ENCODE measurements at regions of chr9 and their contacts with region 1.

Region 1: GRCh38 chr9:114339130-114339908 is 9.7 kb downstream of the ORM2 start:
- DNase-seq: peak in 4 of 5 donors; percentile 58 to 74 (median 62)
- H3K4me3 ChIP-seq: no peak overlapping the region
- H3K27ac ChIP-seq: no peak overlapping the region
- H3K4me1 ChIP-seq: no peaks in the 10 kb centered on the region
- H3K27me3 ChIP-seq: no peaks in the 10 kb centered on the region
- CTCF ChIP-seq: peak; percentile 45 to 64 (median 53)
- EP300 ChIP-seq: no peak
- POLR2A ChIP-seq: no peak

Region 2: DNA sequence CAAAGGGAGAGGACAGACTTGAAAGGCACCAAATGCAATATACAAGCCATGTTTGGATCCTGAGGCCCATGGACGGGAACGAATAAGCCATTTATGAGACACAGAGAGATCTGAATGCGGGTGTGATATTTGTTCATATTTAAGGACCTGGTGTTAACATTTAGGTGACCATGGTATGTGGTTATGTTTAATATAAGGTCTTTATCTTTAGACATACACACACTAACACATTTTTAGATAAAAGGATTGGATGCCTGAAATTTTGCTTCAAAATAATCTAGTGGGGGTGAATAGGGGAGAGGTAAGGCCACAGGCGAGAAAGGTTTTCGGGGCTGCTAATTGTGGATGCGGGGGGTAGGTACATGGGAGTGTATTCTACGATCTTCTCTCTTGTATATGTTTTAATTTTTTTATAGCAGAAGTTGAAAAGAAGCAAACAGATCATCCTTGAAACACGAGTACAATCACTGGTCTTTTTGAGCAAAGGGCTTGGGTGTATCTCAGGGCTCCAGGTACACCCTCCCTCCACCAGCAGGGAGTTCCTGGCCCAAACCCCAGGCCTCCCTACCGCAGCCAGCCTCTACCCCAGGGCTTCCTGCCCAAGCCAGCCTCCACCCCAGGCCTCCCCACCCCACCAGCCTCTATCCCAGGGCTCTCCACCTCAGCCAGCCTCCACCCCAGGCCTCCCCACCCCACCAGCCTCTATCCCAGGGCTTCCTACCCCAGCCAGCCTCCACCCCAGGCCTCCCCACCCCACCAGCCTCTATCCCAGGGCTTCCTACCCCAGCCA is 36.3 kb after region 1 on chr9:
- intact Hi-C with region 1: no loop called
- DNase-seq: peak in 1 of 5 donors; percentile 23
- H3K4me3 ChIP-seq: no peak overlapping the region
- H3K27ac ChIP-seq: no peak overlapping the region
- H3K4me1 ChIP-seq: peaks cover 4% of the 10 kb centered on the region
- H3K27me3 ChIP-seq: no peaks in the 10 kb centered on the region
- CTCF ChIP-seq: no peak
- EP300 ChIP-seq: no peak
- POLR2A ChIP-seq: no peak

Region 3: GRCh38 chr9:114385412-114386181 is 46.3 kb after region 1 on chr9:
- intact Hi-C with region 1: loop called in 1 of 4 experiments (anchors 5 kb)
- DNase-seq: peak in 4 of 5 donors; percentile 54 to 71 (median 64)
- H3K4me3 ChIP-seq: peak overlapping the region; percentile 62
- H3K27ac ChIP-seq: peak overlapping the region in 1 of 2 donors; percentile 88
- H3K4me1 ChIP-seq: peaks cover 30% of the 10 kb centered on the region
- H3K27me3 ChIP-seq: no peaks in the 10 kb centered on the region
- CTCF ChIP-seq: no peak
- EP300 ChIP-seq: no peak
- POLR2A ChIP-seq: peak; percentile 31

Region 4: DNA sequence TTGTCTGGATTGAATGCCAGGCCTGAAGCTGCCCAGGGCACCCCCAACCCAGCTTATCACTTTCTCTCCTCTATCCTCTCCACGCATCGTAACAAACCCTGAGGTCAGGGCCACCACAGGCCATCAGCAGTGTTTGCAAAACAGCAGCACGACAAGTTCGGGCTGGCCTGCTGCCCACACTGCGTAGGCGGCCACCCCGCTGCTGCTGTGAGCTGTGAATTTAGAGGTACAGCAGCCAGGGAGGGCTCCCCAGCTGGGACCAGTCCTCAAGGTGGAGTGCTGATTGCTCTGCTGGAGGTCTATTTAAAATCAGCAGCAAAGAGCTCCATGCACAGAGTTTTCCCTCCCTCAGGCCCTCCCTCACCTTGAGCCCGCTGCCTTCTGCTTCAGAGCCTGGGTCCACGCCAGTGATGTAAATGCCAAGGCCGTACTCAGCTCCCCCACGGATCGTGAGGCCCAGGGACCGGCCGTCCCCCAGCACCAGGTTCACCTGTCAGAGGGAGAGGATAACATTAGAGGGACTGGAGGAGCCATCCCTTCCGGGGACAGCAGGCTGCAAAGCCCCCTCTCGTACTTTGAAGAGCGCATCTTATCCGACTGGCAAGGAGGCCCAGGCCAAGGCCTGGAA is 126.7 kb after region 1 on chr9:
- intact Hi-C with region 1: no loop called
- DNase-seq: peak in 4 of 5 donors; percentile 52 to 69 (median 60)
- H3K4me3 ChIP-seq: no peak overlapping the region
- H3K27ac ChIP-seq: peak overlapping the region in 1 of 2 donors; percentile 13
- H3K4me1 ChIP-seq: peaks cover 6% of the 10 kb centered on the region
- H3K27me3 ChIP-seq: no peaks in the 10 kb centered on the region
- CTCF ChIP-seq: no peak
- EP300 ChIP-seq: no peak
- POLR2A ChIP-seq: no peak

Measured in ovary (tissue), 10 donors.